CD8-positive, alpha-beta memory T cell (primary cell): ENCODE measurements at regions of chrX and their contacts with region 1.

Region 1: DNA sequence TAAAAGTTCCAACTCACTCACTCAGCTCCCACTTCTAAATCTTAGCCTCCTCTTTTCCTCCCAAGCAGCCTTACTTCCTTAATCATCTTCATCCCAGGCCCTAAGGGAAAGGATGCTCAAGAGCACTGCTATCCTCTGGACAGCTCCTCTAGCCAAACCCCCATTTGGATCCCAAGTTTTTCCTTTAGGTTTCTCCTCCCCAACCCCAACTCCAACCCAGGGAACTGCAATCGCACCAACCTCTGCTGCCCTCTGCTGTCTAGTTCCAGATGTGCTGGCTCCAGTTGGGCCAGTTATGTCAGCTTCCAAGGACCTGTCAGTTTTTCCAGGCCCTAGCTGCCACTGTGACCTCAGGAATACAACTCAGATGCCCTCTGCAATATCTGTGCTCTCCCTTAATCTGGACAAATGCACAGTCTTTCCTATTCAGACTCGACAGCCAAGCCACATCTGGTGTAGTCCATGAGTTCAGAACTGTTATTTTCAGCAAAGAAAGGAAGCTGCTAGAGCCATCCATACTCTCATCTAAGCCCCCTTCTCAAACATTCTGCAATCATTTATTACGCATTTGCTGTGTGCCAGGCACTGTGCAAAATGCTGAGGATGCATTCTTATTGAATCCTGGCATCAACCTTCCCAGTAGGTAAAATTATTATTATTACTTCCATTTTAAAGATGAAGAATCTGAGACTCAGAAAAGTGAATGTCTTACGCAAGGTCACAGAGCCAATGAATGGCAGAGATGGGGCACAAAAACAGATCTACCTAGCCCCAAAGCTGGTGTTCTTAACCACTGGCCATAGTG is 12.3 kb upstream of the XPNPEP2 start:
- DNase-seq: peak in 3 of 5 donors; percentile 12 to 51 (median 17)
- H3K4me3 ChIP-seq: no peak overlapping the region
- H3K4me3 Mint-ChIP-seq: no peak overlapping the region
- H3K27ac ChIP-seq: no peak overlapping the region
- H3K27ac Mint-ChIP-seq: peak overlapping the region in 1 of 8 donors; percentile 55
- H3K4me1 ChIP-seq: peaks cover 15% of the 10 kb centered on the region
- H3K4me1 Mint-ChIP-seq: peaks cover 18 to 35% (median 32%) of the 10 kb centered on the region in 3 donors
- H3K27me3 ChIP-seq: no peaks in the 10 kb centered on the region
- H3K27me3 Mint-ChIP-seq: peaks cover 0 to 9% of the 10 kb centered on the region in 2 donors

Region 2: GRCh38 chrX:129637217-129638109 is 89.0 kb before region 1 on chrX:
- CTCF ChIA-PET with region 1: interaction called, 10 read pairs
- POLR2A ChIA-PET with region 1: no interaction called
- DNase-seq: peak; percentile 58 to 76 (median 61)
- H3K4me3 ChIP-seq: no peak overlapping the region
- H3K4me3 Mint-ChIP-seq: no peak overlapping the region
- H3K27ac ChIP-seq: no peak overlapping the region
- H3K27ac Mint-ChIP-seq: no peak overlapping the region
- H3K4me1 ChIP-seq: no peaks in the 10 kb centered on the region
- H3K4me1 Mint-ChIP-seq: peaks cover 4 to 6% (median 5%) of the 10 kb centered on the region in 3 donors
- H3K27me3 ChIP-seq: no peaks in the 10 kb centered on the region
- H3K27me3 Mint-ChIP-seq: peaks cover 2 to 11% of the 10 kb centered on the region in 2 donors

Region 3: DNA sequence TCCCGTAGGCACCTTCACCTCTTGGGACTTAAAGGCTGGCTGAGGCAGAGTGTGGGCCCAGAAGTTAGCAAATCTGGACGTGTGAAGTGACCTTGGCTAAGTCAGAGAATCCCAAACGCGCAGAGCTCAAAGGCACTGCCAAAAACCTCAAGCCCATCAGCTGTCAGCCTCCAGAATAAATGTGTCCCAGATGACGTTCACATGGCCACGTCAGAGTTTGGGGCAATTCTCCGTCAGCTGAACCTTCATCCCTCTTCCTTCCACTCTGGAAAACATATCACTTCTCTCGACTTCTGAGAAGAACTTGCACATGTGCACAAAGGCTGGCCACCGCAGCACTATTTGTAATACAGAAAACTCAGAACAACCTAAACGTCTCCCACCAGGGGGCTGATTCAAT is 36.1 kb before region 1 on chrX:
- CTCF ChIA-PET with region 1: no interaction called
- POLR2A ChIA-PET with region 1: no interaction called
- DNase-seq: no peak
- H3K4me3 ChIP-seq: no peak overlapping the region
- H3K4me3 Mint-ChIP-seq: no peak overlapping the region
- H3K27ac ChIP-seq: no peak overlapping the region
- H3K27ac Mint-ChIP-seq: no peak overlapping the region
- H3K4me1 ChIP-seq: no peaks in the 10 kb centered on the region
- H3K4me1 Mint-ChIP-seq: no peaks in the 10 kb centered on the region
- H3K27me3 ChIP-seq: no peaks in the 10 kb centered on the region
- H3K27me3 Mint-ChIP-seq: peaks cover 0 to 3% of the 10 kb centered on the region in 2 donors

Region 4: DNA sequence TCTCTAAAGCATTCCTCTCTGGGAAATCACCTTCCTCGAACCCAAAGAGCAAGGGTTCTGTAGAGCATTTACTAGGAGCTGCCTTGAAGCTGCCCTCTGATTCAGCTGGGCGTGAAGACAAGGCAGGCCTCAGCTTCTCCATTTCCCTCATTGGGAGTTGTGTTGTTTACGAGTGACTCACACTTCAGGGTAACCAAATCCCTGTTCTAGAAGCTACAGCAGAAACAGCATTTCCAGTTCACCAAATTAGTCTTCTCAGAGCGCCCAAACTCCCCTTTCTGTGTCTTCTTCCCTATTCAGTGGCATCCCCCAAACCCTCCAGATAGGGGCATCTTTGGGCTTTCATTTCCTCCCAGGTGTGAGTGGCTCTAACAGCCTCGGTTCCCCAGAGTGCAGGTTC is 11.4 kb after region 1 on chrX:
- CTCF ChIA-PET with region 1: interaction called, 11 read pairs
- POLR2A ChIA-PET with region 1: no interaction called
- DNase-seq: no peak
- H3K4me3 ChIP-seq: no peak overlapping the region
- H3K4me3 Mint-ChIP-seq: no peak overlapping the region
- H3K27ac ChIP-seq: no peak overlapping the region
- H3K27ac Mint-ChIP-seq: peak overlapping the region in 4 of 8 donors; percentile 19 to 87 (median 50)
- H3K4me1 ChIP-seq: peaks cover 21% of the 10 kb centered on the region
- H3K4me1 Mint-ChIP-seq: peaks cover 19 to 27% (median 20%) of the 10 kb centered on the region in 3 donors
- H3K27me3 ChIP-seq: no peaks in the 10 kb centered on the region
- H3K27me3 Mint-ChIP-seq: peaks cover 0 to 4% of the 10 kb centered on the region in 2 donors

Region 5: DNA sequence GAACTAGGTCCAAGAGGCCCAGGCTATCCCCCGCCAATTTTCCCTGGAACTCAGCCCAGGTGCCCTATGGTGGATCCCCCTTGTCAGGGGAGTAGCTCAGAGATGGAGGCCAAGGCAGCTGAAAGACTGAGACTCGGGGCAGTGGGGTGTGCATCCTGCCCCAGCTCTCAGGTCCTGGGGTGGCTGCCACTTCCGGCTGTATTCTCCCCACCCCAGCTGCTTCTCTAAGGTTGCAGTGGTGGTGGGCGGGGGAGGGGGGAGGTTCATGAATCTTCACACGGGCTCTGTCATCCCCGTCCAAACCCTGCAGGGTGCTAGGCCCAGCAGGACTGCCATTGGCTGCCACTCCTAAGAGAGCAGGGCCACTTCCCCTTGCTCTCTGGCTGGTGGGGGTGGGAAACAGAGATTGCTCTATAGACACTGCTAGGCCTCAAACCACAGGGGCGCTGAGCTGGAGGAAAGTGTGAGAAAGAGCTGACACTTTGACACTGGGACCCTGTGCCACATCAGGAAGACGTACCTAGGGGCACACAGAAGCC is 54.7 kb after region 1 on chrX:
- CTCF ChIA-PET with region 1: interaction called, 10 read pairs
- POLR2A ChIA-PET with region 1: interaction called, 3 read pairs
- DNase-seq: peak; percentile 69 to 94 (median 81)
- H3K4me3 ChIP-seq: peak overlapping the region; percentile 84
- H3K4me3 Mint-ChIP-seq: peak overlapping the region; percentile 87 to 100 (median 97)
- H3K27ac ChIP-seq: peak overlapping the region; percentile 64
- H3K27ac Mint-ChIP-seq: peak overlapping the region; percentile 83 to 96 (median 95)
- H3K4me1 ChIP-seq: peaks cover 69% of the 10 kb centered on the region
- H3K4me1 Mint-ChIP-seq: peaks cover 77 to 97% (median 91%) of the 10 kb centered on the region in 3 donors
- H3K27me3 ChIP-seq: no peaks in the 10 kb centered on the region
- H3K27me3 Mint-ChIP-seq: no peaks in the 10 kb centered on the region

Region 6: DNA sequence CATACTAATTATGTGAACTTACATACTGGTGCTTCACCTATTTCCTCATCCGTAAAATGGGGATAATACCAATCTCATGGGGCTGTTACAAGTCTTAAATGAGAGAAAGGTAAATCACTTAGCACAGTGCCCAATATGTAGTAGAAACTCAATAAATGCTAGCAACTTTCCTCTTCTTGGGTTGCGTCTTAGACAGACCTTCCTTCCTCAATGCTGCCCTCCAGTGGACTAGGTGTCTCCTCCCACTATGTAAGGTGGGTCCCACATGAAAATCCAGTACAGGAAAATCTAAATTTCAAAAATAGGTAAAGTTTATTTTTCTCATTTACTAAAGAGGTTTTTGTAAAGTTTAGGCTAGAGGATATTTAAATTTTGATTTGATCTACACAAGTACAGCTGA is 96.6 kb after region 1 on chrX:
- CTCF ChIA-PET with region 1: interaction called, 10 read pairs
- POLR2A ChIA-PET with region 1: no interaction called
- DNase-seq: peak; percentile 25 to 70 (median 50)
- H3K4me3 ChIP-seq: no peak overlapping the region
- H3K4me3 Mint-ChIP-seq: peak overlapping the region in 1 of 7 donors; percentile 20
- H3K27ac ChIP-seq: no peak overlapping the region
- H3K27ac Mint-ChIP-seq: peak overlapping the region in 2 of 8 donors; percentile 20 to 73
- H3K4me1 ChIP-seq: peaks cover 7% of the 10 kb centered on the region
- H3K4me1 Mint-ChIP-seq: peaks cover 9 to 20% (median 19%) of the 10 kb centered on the region in 3 donors
- H3K27me3 ChIP-seq: no peaks in the 10 kb centered on the region
- H3K27me3 Mint-ChIP-seq: peaks cover 0 to 8% of the 10 kb centered on the region in 2 donors